ENCODE measurements at regions of chr20 and their contacts with region 1.

Region 1: GRCh38 chr20:59032023-59032712 is at the start of gene ATP5F1E:
- DNase-seq: peak; percentile 95 to 99 (median 98)
- ATAC-seq: peak; percentile 97
- H3K4me3 ChIP-seq: peak within 1 kb of the TSS; percentile 75 to 89
- H3K4me3 Mint-ChIP-seq: peak within 1 kb of the TSS; percentile 95
- H3K27ac ChIP-seq: peak within 1 kb of the TSS; percentile 67 to 79
- H3K27ac Mint-ChIP-seq: peak within 1 kb of the TSS; percentile 95
- H3K4me1 ChIP-seq: peaks cover 56% of the 10 kb centered on the region
- H3K4me1 Mint-ChIP-seq: peaks cover 60% of the 10 kb centered on the region
- H3K27me3 ChIP-seq: no peaks in the 10 kb centered on the region
- H3K27me3 Mint-ChIP-seq: no peaks in the 10 kb centered on the region
- CTCF ChIP-seq: no peak
- total RNA-seq, gene ATP5F1E: 50.4 to 52.2 TPM

Region 2: GRCh38 chr20:58309575-58310290 is 722.4 kb before region 1 on chr20 and contains the start of gene RAB22A:
- CTCF ChIA-PET with region 1: no interaction called
- POLR2A ChIA-PET with region 1: no interaction called
- intact Hi-C with region 1: loop called in 1 of 2 experiments (anchors 2 kb)
- DNase-seq: peak; percentile 55 to 92 (median 82)
- ATAC-seq: peak; percentile 61
- H3K4me3 ChIP-seq: peak within 1 kb of the TSS; percentile 72 to 77
- H3K4me3 Mint-ChIP-seq: peak within 1 kb of the TSS; percentile 91
- H3K27ac ChIP-seq: peak within 1 kb of the TSS; percentile 71 to 84
- H3K27ac Mint-ChIP-seq: peak within 1 kb of the TSS; percentile 96
- H3K4me1 ChIP-seq: peaks cover 61% of the 10 kb centered on the region
- H3K4me1 Mint-ChIP-seq: peaks cover 62% of the 10 kb centered on the region
- H3K27me3 ChIP-seq: no peaks in the 10 kb centered on the region
- H3K27me3 Mint-ChIP-seq: no peaks in the 10 kb centered on the region
- CTCF ChIP-seq: no peak
- total RNA-seq, gene RAB22A: 19.0 to 22.8 TPM

Region 3: DNA sequence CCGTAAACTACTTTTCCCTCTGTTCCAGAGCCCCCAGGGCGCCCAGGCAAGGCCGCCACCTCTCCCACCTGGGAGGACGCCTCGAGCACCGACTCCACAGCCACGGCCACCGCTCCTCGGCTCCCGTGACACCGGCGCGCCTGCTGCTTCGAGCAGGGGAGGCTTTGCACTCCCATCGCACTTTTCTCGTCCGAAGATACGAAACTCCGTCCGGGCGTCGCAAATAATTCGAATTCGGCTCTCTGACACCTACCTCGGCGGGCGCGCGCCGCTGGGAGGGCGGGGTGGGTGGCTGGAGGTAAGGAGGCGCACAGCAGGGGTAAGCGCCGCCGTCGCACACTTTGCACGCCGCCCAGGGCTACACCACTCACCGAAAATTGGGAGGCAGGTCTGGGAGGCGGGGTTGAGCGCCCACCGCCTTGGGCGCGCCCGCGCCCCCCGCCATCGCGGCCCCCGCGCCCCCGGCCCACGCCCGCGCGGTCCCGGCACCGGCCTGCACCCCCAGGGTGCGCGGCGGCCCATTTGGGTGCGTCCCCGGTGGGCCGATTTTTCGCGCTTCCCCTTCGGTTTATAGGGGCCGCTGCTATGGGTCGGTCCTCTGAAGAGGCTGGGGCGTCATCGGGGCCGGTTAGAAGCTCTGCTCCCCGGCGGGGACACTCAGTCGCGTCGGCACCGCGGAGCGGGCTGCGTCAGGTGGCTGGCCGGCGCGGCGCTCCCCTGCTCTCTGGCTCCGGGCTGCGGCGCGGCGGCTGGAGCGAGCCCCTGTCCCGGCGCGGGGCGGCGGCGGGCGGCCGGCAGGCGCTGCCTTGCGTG is 143.4 kb before region 1 on chr20:
- CTCF ChIA-PET with region 1: interaction called, 3 read pairs
- POLR2A ChIA-PET with region 1: interaction called, 41 read pairs
- intact Hi-C with region 1: loop called (anchors 1 kb)
- DNase-seq: peak; percentile 69 to 92 (median 82)
- ATAC-seq: peak; percentile 49
- H3K4me3 ChIP-seq: peak overlapping the region; percentile 66 to 72
- H3K4me3 Mint-ChIP-seq: peak overlapping the region; percentile 83
- H3K27ac ChIP-seq: peak overlapping the region; percentile 79 to 95
- H3K27ac Mint-ChIP-seq: peak overlapping the region; percentile 92
- H3K4me1 ChIP-seq: peaks cover 14% of the 10 kb centered on the region
- H3K4me1 Mint-ChIP-seq: peaks cover 35% of the 10 kb centered on the region
- H3K27me3 ChIP-seq: no peaks in the 10 kb centered on the region
- H3K27me3 Mint-ChIP-seq: no peaks in the 10 kb centered on the region
- CTCF ChIP-seq: no peak

Region 4: DNA sequence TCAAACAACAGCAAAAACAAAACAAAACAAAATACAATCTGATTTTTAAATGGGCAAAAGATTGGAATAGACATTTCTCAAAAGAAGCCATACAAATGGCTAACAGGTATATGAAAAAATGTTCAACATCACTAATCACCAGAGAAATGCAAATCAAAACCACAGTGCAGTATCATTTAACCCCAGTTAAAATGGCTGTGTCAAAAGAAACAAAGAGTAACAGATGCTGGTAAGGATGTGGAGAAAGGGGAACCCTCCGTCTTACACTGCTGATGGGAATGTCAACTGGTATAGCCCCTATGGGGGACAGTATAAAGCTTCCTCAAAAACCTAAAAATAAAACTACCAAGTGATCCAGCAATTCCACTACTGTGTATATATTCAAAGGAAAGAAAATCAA is 62.0 kb before region 1 on chr20:
- CTCF ChIA-PET with region 1: no interaction called
- POLR2A ChIA-PET with region 1: no interaction called
- intact Hi-C with region 1: no loop called
- DNase-seq: no peak
- ATAC-seq: no peak
- H3K4me3 ChIP-seq: no peak overlapping the region
- H3K4me3 Mint-ChIP-seq: no peak overlapping the region
- H3K27ac ChIP-seq: no peak overlapping the region
- H3K27ac Mint-ChIP-seq: no peak overlapping the region
- H3K4me1 ChIP-seq: no peaks in the 10 kb centered on the region
- H3K4me1 Mint-ChIP-seq: no peaks in the 10 kb centered on the region
- H3K27me3 ChIP-seq: no peaks in the 10 kb centered on the region
- H3K27me3 Mint-ChIP-seq: no peaks in the 10 kb centered on the region
- CTCF ChIP-seq: no peak

Region 5: GRCh38 chr20:58980700-58981627 is 51.2 kb before region 1 on chr20 and contains the start of gene NELFCD:
- CTCF ChIA-PET with region 1: no interaction called
- POLR2A ChIA-PET with region 1: interaction called, 7 read pairs
- intact Hi-C with region 1: loop called (anchors 1 kb)
- DNase-seq: peak; percentile 81 to 94 (median 89)
- ATAC-seq: peak; percentile 87
- H3K4me3 ChIP-seq: peak within 1 kb of the TSS; percentile 77 to 93
- H3K4me3 Mint-ChIP-seq: peak within 1 kb of the TSS; percentile 93
- H3K27ac ChIP-seq: peak within 1 kb of the TSS; percentile 62 to 66
- H3K27ac Mint-ChIP-seq: peak within 1 kb of the TSS; percentile 94
- H3K4me1 ChIP-seq: peaks cover 29% of the 10 kb centered on the region
- H3K4me1 Mint-ChIP-seq: peaks cover 39% of the 10 kb centered on the region
- H3K27me3 ChIP-seq: no peaks in the 10 kb centered on the region
- H3K27me3 Mint-ChIP-seq: no peaks in the 10 kb centered on the region
- CTCF ChIP-seq: no peak
- total RNA-seq, gene NELFCD: 101 to 113 TPM

Region 6: GRCh38 chr20:59042796-59043660 is 10.9 kb after region 1 on chr20:
- CTCF ChIA-PET with region 1: interaction called, 4 read pairs
- POLR2A ChIA-PET with region 1: interaction called, 46 read pairs
- intact Hi-C with region 1: loop called (anchors 1 kb)
- DNase-seq: peak; percentile 88 to 97 (median 94)
- ATAC-seq: peak; percentile 92
- H3K4me3 ChIP-seq: peak overlapping the region; percentile 67 to 94
- H3K4me3 Mint-ChIP-seq: peak overlapping the region; percentile 90
- H3K27ac ChIP-seq: peak overlapping the region; percentile 74 to 92
- H3K27ac Mint-ChIP-seq: peak overlapping the region; percentile 93
- H3K4me1 ChIP-seq: peaks cover 48% of the 10 kb centered on the region
- H3K4me1 Mint-ChIP-seq: peaks cover 52% of the 10 kb centered on the region
- H3K27me3 ChIP-seq: no peaks in the 10 kb centered on the region
- H3K27me3 Mint-ChIP-seq: no peaks in the 10 kb centered on the region
- CTCF ChIP-seq: no peak

Region 7: DNA sequence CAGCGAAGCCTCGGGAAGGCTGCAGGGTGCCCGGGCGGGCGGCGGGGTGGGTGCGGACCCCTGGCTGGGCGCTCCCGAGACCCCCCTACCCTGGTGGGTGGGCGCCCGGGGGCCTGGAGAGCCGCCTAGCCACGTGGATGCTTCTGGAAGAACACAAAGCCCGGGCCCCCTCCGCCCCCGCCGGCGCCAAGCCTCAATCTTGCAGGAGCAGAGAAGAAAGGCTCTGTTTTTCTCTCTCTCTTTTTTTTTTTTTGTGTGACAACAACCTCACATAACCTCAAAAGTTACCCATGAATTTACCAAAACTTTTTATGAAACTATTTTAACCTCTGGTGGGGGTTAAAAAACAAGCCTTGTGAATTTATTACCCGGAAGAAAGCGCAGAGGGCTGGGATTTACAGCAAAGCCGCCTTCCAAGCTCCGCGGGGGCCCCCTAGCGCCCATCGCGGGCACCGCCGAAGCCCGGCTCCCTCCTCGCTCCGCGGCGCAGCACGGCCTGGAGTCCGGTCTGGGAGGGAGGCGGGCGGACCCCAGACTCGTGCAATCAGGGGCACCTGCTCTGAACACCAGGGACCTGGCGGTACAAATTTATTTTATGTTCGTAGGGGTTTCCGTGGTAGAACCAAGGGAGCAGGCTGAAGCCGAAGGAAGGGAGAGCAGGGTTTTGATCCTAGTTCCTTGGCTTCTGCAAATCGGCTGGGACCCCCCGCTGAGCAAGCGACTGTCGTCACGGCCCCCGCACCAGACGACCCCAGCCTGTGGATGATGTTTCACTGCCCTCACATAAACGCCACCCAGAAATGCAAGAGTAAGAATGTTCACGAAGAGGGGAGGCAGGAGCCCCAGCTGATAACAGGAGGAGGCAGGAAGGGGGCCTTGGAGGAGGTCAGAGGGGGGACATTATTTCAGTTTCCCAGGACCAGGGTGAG is 190.3 kb after region 1 on chr20:
- CTCF ChIA-PET with region 1: interaction called, 3 read pairs
- POLR2A ChIA-PET with region 1: interaction called, 6 read pairs
- intact Hi-C with region 1: loop called in 1 of 2 experiments (anchors 1 kb)
- DNase-seq: peak; percentile 64 to 89 (median 82)
- ATAC-seq: peak; percentile 94
- H3K4me3 ChIP-seq: peak overlapping the region; percentile 39 to 50
- H3K4me3 Mint-ChIP-seq: peak overlapping the region; percentile 78
- H3K27ac ChIP-seq: peak overlapping the region in 1 of 2 experiments; percentile 31
- H3K27ac Mint-ChIP-seq: peak overlapping the region; percentile 88
- H3K4me1 ChIP-seq: peaks cover 18% of the 10 kb centered on the region
- H3K4me1 Mint-ChIP-seq: peaks cover 34% of the 10 kb centered on the region
- H3K27me3 ChIP-seq: no peaks in the 10 kb centered on the region
- H3K27me3 Mint-ChIP-seq: no peaks in the 10 kb centered on the region
- CTCF ChIP-seq: peak; percentile 96

Region 8: DNA sequence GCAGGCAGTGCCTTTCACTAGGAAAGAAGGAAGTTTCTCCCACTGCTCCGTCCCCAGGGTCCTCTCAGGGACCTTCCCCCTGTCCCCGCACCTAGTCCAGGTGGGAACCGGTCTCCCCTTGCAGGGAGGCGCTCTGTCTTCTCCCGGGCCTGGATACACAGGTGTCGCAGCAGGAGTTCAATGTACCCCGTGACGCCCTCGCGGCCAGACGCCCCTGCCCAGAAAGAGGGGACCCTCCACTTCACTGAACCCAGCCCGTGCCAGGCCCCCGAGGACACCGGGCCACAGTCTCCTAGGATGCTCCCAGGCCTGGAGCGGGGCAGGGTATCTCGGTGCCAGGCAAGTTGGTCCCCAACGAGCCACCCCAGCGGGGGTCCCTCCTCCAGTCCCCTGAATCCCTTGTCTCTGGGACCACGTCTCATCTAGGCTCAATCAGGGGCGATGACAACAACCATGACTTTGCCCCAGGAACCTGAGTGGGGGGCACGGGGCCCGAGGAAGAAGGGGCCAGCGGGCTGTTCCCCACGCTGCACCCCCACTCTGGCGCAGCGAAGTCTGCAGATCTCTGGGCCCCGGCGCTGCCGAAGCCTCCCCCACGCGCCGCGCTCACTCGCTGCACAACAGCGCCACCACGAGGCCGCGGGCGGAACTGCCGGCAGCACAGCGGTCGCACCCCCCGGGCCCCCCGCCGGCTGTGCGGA is 371.2 kb after region 1 on chr20:
- CTCF ChIA-PET with region 1: no interaction called
- POLR2A ChIA-PET with region 1: interaction called, 3 read pairs
- intact Hi-C with region 1: loop called in 1 of 2 experiments (anchors 1 kb)
- DNase-seq: peak; percentile 57 to 91 (median 73)
- ATAC-seq: peak; percentile 84
- H3K4me3 ChIP-seq: peak overlapping the region; percentile 10 to 47
- H3K4me3 Mint-ChIP-seq: no peak overlapping the region
- H3K27ac ChIP-seq: peak overlapping the region in 1 of 2 experiments; percentile 21
- H3K27ac Mint-ChIP-seq: peak overlapping the region; percentile 81
- H3K4me1 ChIP-seq: peaks cover 38% of the 10 kb centered on the region
- H3K4me1 Mint-ChIP-seq: peaks cover 4% of the 10 kb centered on the region
- H3K27me3 ChIP-seq: peaks cover 7 to 13% of the 10 kb centered on the region in 2 experiments
- H3K27me3 Mint-ChIP-seq: peaks cover 8% of the 10 kb centered on the region
- CTCF ChIP-seq: peak; percentile 99

Measured in CD8-positive, alpha-beta T cell (primary cell).